ENCODE measurements at regions of chr11 and their contacts with region 1.

Region 1: GRCh38 chr11:10540923-10541560 is at the start of gene RNF141:
- DNase-seq: peak; percentile 87 to 99 (median 94)
- ATAC-seq: peak; percentile 99
- H3K4me3 ChIP-seq: peak within 1 kb of the TSS; percentile 81
- H3K4me3 Mint-ChIP-seq: peak within 1 kb of the TSS; percentile 86 to 93 (median 90)
- H3K27ac ChIP-seq: peak within 1 kb of the TSS; percentile 90
- H3K27ac Mint-ChIP-seq: peak within 1 kb of the TSS; percentile 68 to 95 (median 86)
- H3K4me1 ChIP-seq: peaks cover 0 to 8% of the 10 kb centered on the region in 2 donors
- H3K4me1 Mint-ChIP-seq: peaks cover 9 to 37% (median 27%) of the 10 kb centered on the region in 7 donors
- H3K27me3 ChIP-seq: no peaks in the 10 kb centered on the region
- H3K27me3 Mint-ChIP-seq: no peaks in the 10 kb centered on the region
- total RNA-seq, gene RNF141: 11.9 to 22.7 (median 17.3) TPM

Region 2: DNA sequence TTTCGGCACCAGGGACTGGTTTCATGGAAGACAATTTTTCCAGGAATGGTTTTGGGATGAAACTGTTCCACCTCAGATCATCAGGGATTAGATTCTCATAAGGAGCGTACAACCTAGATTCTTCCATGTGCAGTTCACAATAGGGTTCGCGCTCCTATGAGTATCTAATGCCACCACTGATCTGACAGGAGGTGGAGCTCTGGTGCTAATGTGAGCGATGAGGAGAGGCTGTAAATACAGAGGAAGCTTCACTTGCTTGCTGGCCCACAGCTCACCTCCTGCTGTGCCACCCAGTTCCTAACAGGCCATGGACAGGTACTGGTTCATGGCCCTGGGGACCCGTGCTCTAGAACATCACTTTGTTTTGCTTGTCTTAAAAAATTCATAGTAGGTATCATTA is 127.8 kb before region 1 on chr11:
- CTCF ChIA-PET with region 1: interaction called, 18 read pairs
- POLR2A ChIA-PET with region 1: no interaction called
- intact Hi-C with region 1: loop called in 1 of 2 experiments (anchors 1 kb)
- DNase-seq: peak in 7 of 9 donors; percentile 35 to 65 (median 57)
- ATAC-seq: peak; percentile 81
- H3K4me3 ChIP-seq: no peak overlapping the region
- H3K4me3 Mint-ChIP-seq: no peak overlapping the region
- H3K27ac ChIP-seq: no peak overlapping the region
- H3K27ac Mint-ChIP-seq: no peak overlapping the region
- H3K4me1 ChIP-seq: peaks cover 12 to 27% of the 10 kb centered on the region in 2 donors
- H3K4me1 Mint-ChIP-seq: peaks cover 29 to 47% (median 39%) of the 10 kb centered on the region in 7 donors
- H3K27me3 ChIP-seq: no peaks in the 10 kb centered on the region
- H3K27me3 Mint-ChIP-seq: peaks cover 0 to 16% (median 0%) of the 10 kb centered on the region in 5 donors

Region 3: DNA sequence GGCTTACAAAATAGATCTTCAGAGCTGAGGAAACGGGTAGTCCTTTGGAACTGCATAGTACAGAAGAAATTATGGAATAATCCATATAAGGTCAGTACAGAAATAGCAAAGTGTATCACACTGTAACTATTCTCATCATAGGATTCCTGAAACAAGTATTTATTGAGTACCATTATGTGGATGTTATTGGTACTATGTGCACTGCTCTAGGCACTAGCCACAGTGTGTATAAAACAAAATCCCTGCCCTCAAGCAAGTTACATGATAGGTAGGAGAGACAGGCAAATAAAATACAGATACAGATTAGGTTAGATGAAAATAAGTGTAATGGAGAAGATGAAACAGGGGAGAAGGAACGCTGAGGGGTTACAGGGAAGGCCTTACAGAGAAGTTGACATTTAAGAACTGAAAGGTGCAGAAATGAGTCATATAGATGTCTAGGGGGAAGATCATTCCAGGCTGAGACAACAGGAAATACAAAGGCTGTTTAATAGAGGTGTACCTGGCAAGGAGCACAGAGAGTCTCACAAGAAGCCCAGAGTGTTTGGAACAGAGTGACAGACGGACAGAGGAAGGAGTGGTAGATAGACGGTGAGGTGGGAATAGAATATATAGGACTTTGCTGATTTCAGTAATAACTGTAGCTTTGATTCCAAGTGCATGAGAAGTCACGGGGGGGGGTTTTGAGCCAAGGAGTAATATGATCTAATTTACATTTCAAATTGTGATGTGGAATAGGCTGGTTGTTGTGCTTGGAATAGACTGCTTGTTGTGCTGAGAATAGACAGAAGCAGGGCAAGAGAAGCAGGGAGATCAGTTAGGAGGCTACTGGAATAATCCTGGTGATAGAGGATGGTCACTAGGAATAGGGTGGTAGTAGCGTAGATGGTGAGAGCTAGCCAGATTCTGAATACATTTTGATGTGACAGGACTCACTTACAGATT is 13.8 kb before region 1 on chr11:
- CTCF ChIA-PET with region 1: interaction called, 24 read pairs
- POLR2A ChIA-PET with region 1: interaction called, 8 read pairs
- intact Hi-C with region 1: loop called in 1 of 2 experiments (anchors 2 kb)
- DNase-seq: no peak
- ATAC-seq: no peak
- H3K4me3 ChIP-seq: no peak overlapping the region
- H3K4me3 Mint-ChIP-seq: peak overlapping the region in 2 of 10 donors; percentile 1 to 3
- H3K27ac ChIP-seq: no peak overlapping the region
- H3K27ac Mint-ChIP-seq: peak overlapping the region in 7 of 9 donors; percentile 1 to 60 (median 20)
- H3K4me1 ChIP-seq: no peaks in the 10 kb centered on the region
- H3K4me1 Mint-ChIP-seq: peaks cover 6 to 22% (median 10%) of the 10 kb centered on the region in 7 donors
- H3K27me3 ChIP-seq: no peaks in the 10 kb centered on the region
- H3K27me3 Mint-ChIP-seq: no peaks in the 10 kb centered on the region

Region 4: DNA sequence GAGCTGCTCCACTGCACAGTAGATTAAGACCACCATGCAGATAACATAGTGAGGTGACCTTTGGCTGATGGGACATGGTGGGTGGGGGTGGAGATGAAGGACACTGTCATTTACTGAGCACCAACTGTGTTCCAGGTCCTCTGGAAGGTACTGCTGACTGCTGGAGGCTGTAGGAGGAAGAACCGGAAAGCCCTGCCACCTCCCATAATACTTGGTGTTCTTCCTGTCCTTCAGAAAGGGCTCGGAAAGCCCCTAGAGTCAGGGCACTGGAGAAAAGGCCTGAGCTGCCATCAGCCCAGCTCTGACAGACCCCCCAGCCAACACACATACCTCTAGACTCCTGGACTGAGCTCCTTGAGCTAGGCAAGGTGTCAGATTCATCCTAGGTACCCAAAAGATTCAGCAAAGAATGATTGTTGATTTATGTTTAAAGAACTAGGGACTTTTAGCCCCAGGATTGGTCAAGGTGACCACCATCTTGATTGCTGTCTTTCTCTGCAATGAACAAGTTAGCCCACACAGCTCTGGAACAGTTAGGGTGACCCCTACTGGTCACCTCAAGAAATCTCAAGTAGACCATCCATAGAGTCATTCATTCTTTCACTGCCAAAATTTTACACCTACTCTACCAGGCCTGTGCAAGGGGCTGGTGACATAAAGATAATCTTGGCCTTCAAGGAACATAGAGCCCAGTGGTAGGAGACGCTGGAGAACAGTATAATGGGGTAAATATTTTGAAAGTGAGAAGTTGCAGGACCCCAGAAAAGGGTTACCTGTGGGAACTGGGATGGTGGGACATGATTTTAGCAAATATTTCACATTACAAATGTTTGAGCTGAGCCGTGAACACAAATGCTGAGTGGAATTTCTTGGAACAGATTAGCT is 113.1 kb after region 1 on chr11:
- CTCF ChIA-PET with region 1: interaction called, 11 read pairs
- POLR2A ChIA-PET with region 1: no interaction called
- intact Hi-C with region 1: loop called (anchors 2 to 10 kb)
- DNase-seq: peak in 6 of 9 donors; percentile 11 to 63 (median 56)
- ATAC-seq: peak; percentile 89
- H3K4me3 ChIP-seq: no peak overlapping the region
- H3K4me3 Mint-ChIP-seq: no peak overlapping the region
- H3K27ac ChIP-seq: no peak overlapping the region
- H3K27ac Mint-ChIP-seq: peak overlapping the region in 1 of 9 donors; percentile 25
- H3K4me1 ChIP-seq: no peaks in the 10 kb centered on the region
- H3K4me1 Mint-ChIP-seq: peaks cover 0 to 33% (median 0%) of the 10 kb centered on the region in 7 donors
- H3K27me3 ChIP-seq: no peaks in the 10 kb centered on the region
- H3K27me3 Mint-ChIP-seq: no peaks in the 10 kb centered on the region

Region 5: GRCh38 chr11:10750838-10751580 is 210.0 kb after region 1 on chr11 and contains the start of gene CTR9:
- CTCF ChIA-PET with region 1: interaction called, 3 read pairs
- POLR2A ChIA-PET with region 1: interaction called, 4 read pairs
- intact Hi-C with region 1: loop called in 1 of 2 experiments (anchors 1 kb)
- DNase-seq: peak; percentile 78 to 94 (median 88)
- ATAC-seq: peak; percentile 96
- H3K4me3 ChIP-seq: peak within 1 kb of the TSS; percentile 79
- H3K4me3 Mint-ChIP-seq: peak within 1 kb of the TSS; percentile 95 to 99 (median 97)
- H3K27ac ChIP-seq: peak within 1 kb of the TSS; percentile 85
- H3K27ac Mint-ChIP-seq: peak within 1 kb of the TSS; percentile 90 to 96 (median 91)
- H3K4me1 ChIP-seq: peaks cover 7 to 8% of the 10 kb centered on the region in 2 donors
- H3K4me1 Mint-ChIP-seq: peaks cover 12 to 36% (median 31%) of the 10 kb centered on the region in 7 donors
- H3K27me3 ChIP-seq: no peaks in the 10 kb centered on the region
- H3K27me3 Mint-ChIP-seq: no peaks in the 10 kb centered on the region
- total RNA-seq, gene CTR9: 23.8 to 64.0 (median 47.8) TPM

Region 6: DNA sequence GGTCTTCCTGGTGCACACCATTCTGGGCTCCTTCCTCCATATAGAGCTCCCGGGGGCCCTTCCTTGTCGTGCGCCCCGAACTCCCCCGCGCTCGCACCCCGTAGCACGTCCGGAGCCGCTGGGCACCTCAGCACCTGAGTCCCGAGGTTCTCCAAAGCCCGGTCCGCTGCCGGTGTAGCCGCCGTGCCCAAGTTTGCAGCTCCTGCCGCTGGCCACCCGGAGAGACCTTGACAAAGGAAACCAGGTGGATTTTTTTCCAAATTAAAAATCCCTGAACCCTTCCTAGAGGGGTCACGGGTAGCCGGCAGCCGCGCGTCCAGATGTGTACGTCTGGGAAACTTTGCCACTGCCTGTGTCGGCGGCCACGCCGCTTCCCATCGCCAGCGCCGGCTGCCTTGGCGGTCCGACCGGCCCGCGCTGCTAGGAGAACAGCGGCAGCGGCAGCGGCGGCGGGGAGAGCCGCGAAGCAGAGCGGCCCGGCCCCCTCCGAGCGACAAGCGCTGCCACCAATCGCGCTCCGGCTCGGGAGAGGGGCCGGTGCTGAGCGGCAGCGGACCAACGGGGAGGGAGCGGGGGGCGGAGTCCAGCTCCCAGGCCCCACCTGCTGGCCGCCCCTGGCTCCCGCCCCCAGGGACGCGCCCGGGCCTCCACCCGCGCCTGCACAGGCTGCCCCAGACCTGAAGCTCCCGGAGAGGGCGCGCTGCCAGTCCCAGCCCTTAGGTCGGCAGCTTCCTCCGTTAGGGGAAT is 1080.7 kb after region 1 on chr11 and contains the start of gene GALNT18:
- CTCF ChIA-PET with region 1: no interaction called
- POLR2A ChIA-PET with region 1: no interaction called
- intact Hi-C with region 1: loop called in 1 of 2 experiments (anchors 5 kb)
- DNase-seq: peak; percentile 11 to 89 (median 27)
- ATAC-seq: peak; percentile 95
- H3K4me3 ChIP-seq: peak within 1 kb of the TSS; percentile 17
- H3K4me3 Mint-ChIP-seq: peak within 1 kb of the TSS in 9 of 10 donors; percentile 57 to 89 (median 65)
- H3K27ac ChIP-seq: no peak within 1 kb of the TSS
- H3K27ac Mint-ChIP-seq: no peak within 1 kb of the TSS
- H3K4me1 ChIP-seq: peaks cover 0 to 7% of the 10 kb centered on the region in 2 donors
- H3K4me1 Mint-ChIP-seq: peaks cover 0 to 15% (median 8%) of the 10 kb centered on the region in 7 donors
- H3K27me3 ChIP-seq: peaks cover 3 to 6% of the 10 kb centered on the region in 2 donors
- H3K27me3 Mint-ChIP-seq: peaks cover 30 to 66% (median 45%) of the 10 kb centered on the region in 5 donors
- total RNA-seq, gene GALNT18: 0.20 to 1.7 TPM in 2 of 5 experiments, not detected in the others